ENCODE measurements at regions of chr9 and their contacts with region 1.

Region 1: DNA sequence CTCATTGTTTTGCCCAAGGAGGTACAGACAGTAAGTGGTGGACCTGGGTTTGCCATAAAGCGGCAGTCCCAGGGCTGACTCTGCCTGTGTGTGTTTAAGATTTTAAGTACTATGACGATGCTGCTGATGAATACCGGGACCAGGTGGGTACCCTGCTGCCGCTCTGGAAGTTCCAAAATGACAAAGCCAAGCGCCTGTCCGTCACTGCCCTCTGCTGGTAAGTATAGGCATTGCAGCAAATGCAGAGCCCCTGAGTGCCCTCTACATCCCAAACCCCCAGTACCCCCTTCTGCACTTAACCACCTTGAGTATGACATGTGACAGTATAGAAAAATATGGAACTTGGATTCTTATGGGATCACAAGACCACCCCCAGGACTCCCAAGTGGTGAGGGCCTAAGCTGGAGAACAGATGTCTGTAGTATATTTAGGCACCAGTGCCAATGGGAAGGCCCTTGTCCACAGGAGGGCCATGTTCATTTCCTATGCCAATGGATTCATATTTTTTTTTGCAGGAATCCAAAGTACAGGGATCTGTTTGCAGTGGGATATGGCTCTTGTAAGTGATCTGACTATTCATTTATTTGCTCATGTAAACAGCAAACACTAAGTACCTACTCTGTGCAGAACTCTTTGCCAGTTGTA is 22.0 kb downstream of the ENHO start:
- DNase-seq: no peak
- H3K4me3 ChIP-seq: no peak overlapping the region
- CTCF ChIP-seq: peak; percentile 90

Region 2: GRCh38 chr9:34332076-34332964 is 168.4 kb before region 1 on chr9:
- CTCF ChIA-PET with region 1: interaction called, 49 read pairs
- POLR2A ChIA-PET with region 1: no interaction called
- DNase-seq: no peak
- H3K4me3 ChIP-seq: no peak overlapping the region
- CTCF ChIP-seq: peak; percentile 35

Region 3: DNA sequence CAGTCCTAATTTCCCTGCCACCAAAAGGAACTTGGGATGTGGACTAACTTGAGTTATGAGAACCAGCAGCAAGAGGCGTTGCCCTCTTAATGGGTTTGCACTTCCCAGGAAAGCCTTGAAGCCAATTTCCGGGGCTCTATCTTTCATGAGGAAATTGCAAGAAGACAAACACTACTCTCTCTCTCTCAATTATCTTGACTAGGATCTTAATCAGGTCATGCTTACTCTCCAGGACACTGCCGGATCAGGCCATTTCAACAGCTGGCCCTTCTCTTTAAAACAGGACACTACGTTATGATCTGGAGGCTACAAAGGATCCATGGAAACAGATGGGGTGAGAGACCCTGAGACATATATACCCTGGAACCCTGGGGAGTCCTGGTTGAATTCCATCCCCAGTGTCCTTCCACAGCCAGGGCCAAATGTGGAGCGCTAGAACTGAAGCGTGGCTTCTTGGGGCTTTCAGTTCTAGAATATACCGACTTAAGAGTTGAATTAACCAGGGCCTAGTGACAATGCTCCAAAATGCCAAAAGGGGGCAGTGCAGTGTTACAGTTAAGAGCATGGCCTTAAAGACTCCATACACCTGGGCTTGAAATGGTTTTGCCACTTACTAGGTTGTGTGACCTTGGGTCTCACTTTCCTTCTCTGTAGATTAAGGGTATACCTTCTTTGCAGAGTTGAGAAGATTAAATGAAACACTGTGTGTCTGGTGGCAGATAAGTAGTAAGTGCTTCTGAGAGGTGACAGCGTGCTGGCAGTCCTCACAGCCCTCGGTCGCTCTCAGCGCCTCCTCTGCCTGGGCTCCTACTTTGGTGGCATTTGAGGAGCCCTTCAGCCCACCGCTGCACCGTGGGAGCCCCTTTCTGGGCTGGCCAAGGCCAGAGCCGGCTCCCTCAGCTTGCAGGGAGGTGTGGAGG is 63.5 kb before region 1 on chr9:
- CTCF ChIA-PET with region 1: interaction called, 54 read pairs
- POLR2A ChIA-PET with region 1: no interaction called
- DNase-seq: no peak
- H3K4me3 ChIP-seq: no peak overlapping the region
- CTCF ChIP-seq: peak; percentile 71

Region 4: DNA sequence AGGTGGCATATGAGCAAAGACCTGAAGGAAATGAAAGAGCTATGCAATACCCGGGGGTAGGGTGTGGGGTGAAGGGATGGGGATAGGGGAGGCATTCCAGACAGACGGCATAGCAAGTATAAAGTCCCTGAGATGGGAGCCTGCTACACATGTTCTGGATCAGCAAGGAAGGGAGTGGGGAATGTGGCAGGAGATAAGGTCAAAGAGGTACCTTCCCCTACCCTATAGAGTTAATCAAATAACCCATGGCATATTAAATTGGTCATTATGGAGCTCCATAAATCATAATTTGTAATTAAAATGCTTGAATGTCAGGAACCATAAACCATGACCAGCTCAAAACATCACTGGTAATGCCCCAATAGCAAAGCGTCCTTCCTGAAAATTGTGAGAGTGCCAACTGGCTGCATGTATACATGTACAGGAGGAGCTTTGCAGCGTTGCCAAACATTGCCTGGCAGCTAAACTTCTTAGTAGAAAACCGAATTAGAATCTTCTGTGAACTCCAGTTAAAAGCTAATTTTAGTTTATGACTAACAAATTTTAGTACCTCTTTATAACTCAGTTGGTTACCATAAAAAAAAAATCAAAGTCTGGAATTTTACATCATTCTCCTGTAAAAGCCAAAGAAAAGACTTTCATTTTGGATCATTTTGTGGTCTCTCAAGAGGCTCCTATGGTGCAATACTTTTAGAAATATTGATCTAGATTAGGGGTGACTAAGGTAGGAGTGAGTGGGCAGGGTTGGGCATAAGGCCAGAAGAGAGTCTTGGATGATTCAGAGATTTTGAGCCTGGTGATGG is 37.4 kb before region 1 on chr9:
- CTCF ChIA-PET with region 1: interaction called, 34 read pairs
- POLR2A ChIA-PET with region 1: no interaction called
- DNase-seq: no peak
- H3K4me3 ChIP-seq: no peak overlapping the region
- CTCF ChIP-seq: no peak

Region 5: GRCh38 chr9:34522971-34523797 is 22.4 kb after region 1 on chr9 and contains the start of gene ENHO:
- CTCF ChIA-PET with region 1: interaction called, 97 read pairs
- POLR2A ChIA-PET with region 1: no interaction called
- DNase-seq: peak; percentile 4
- H3K4me3 ChIP-seq: peak within 1 kb of the TSS; percentile 42
- CTCF ChIP-seq: no peak

Region 6: DNA sequence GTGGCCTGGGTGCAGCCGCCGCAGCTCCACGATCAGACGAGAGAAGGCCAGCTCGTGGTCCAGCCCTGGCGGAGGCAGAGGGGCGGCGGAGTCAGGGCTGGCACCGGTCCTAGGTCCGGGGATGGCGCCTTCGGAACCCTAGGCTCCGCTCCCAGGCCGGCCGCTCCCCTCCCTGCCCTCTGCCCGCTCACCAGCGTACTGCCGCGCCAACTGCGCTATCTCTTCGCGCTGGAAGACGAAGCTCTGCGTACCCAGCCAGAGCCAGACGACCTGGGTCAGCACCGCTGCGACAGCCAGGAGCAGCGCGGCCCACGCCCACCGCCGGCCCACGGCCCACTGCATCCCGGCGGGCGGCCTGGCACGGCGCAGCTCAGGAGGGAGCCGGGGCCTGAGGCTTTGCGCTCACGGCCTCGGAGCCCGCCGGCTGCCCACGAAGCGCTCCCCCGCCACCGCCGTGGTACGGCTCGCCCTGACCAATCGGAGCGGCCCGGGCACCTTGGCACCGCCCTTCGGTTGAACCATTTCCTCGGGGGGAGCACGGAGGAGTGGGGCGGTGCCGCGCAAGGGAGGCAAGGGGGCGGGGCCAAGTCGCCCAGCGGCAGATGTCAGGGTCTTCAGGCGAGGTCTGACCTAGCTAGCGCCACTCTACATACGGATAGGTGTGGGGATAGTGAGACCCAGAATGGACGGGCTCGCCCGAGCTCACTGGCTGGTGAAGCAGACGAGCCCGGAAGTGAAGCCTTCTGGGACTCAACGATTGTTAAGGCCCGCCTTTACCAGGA is 136.8 kb after region 1 on chr9 and contains the start of gene SIGMAR1:
- CTCF ChIA-PET with region 1: interaction called, 11 read pairs
- POLR2A ChIA-PET with region 1: no interaction called
- DNase-seq: no peak
- H3K4me3 ChIP-seq: peak within 1 kb of the TSS; percentile 80
- CTCF ChIP-seq: no peak

Region 7: GRCh38 chr9:34650816-34651215 is 150.1 kb after region 1 on chr9:
- CTCF ChIA-PET with region 1: no interaction called
- POLR2A ChIA-PET with region 1: no interaction called
- DNase-seq: no peak
- H3K4me3 ChIP-seq: no peak overlapping the region; the same call in 1 of the 2 replicates
- CTCF ChIP-seq: no peak